ENCODE measurements at regions of chr3 and their contacts with region 1.

Region 1: GRCh38 chr3:66253790-66254620 is 33.2 kb downstream of the SLC25A26 start:
- DNase-seq: no peak
- H3K4me3 Mint-ChIP-seq: no peak overlapping the region
- H3K27ac Mint-ChIP-seq: no peak overlapping the region
- H3K4me1 Mint-ChIP-seq: peaks cover 6% of the 10 kb centered on the region
- H3K27me3 Mint-ChIP-seq: no peaks in the 10 kb centered on the region

Region 2: GRCh38 chr3:65713016-65713415 is 541.0 kb before region 1 on chr3:
- intact Hi-C with region 1: no loop called
- DNase-seq: no peak
- H3K4me3 Mint-ChIP-seq: no peak overlapping the region
- H3K27ac Mint-ChIP-seq: no peak overlapping the region
- H3K4me1 Mint-ChIP-seq: no peaks in the 10 kb centered on the region
- H3K27me3 Mint-ChIP-seq: no peaks in the 10 kb centered on the region

Region 3: DNA sequence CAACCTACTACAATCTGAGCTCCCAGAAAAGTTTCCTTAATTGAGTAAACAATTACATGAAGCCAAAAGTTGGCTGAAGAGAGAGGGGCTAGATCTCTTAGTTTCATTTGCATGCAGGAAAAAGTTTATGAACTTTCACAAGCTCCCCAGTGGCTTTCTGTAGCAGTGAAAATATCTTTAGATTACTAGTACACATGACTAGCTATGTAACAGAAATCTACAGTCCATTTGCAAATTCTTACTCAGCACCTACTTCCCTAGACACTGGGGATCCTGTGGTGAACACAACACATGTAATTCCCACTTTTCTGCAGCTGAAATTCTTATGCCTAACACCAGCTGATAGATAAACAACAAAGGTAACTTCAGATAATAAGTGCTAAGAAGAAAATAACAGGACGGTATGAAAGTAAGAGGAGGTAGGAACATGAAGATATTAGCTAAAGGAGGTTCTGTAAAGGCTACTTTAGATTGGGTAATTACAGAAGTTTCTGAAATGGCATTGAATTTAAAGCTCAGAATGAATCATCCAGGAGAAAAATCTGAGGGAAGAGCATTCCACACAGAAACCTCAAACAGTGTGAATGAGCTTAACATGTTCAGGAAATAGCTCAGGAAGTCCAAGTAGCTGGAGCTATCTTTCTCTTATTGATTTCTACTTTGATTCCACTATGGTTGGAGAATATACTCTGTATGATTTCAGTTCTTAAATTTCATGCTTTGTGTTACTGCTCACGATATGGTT is 420.1 kb before region 1 on chr3:
- intact Hi-C with region 1: no loop called
- DNase-seq: no peak
- H3K4me3 Mint-ChIP-seq: no peak overlapping the region
- H3K27ac Mint-ChIP-seq: no peak overlapping the region
- H3K4me1 Mint-ChIP-seq: no peaks in the 10 kb centered on the region
- H3K27me3 Mint-ChIP-seq: no peaks in the 10 kb centered on the region

Region 4: DNA sequence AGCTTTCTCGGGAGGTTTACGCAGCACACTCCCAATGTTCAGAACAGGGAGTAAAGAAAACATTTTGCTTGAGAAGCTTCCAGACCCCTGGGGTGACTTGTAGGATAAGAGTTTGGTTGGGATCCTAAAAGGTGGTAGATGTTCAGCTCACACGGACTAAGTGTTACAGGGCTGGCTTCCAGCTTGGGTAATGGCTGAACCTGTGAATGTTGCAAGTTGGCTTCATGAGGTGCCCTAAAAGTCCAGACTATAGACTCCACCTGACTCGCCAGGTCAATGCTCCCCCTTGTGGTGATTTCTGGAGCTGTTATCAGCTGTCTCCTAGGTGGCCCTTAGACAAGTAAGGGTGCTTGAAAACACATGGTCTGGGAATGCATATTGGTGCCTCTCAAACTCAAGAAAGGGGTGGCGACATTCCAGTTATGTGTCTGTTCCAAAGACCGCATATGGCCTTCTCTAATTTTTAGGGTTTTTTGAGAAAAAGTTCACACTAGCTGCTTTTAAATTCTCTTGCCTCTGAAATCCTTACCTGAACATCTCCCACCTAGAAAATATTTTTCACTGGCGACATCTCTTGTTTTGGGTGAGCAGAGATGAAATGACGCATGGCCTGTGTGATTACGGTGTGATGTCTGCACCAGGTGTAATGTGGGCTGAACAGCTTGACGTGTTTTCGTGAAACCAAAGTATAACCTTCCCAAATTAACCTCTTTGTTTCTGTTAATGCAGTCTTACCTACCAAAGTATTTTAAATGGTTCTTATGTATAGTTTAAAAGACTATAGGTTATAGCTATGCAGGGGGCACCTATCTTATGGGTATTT is 568.4 kb after region 1 on chr3:
- intact Hi-C with region 1: loop called (anchors 2 kb)
- DNase-seq: peak; percentile 91
- H3K4me3 Mint-ChIP-seq: no peak overlapping the region
- H3K27ac Mint-ChIP-seq: no peak overlapping the region
- H3K4me1 Mint-ChIP-seq: no peaks in the 10 kb centered on the region
- H3K27me3 Mint-ChIP-seq: peaks cover 7% of the 10 kb centered on the region